MCF 10A (cell line): ENCODE measurements at regions of chr3 and their contacts with region 1.

Region 1: DNA sequence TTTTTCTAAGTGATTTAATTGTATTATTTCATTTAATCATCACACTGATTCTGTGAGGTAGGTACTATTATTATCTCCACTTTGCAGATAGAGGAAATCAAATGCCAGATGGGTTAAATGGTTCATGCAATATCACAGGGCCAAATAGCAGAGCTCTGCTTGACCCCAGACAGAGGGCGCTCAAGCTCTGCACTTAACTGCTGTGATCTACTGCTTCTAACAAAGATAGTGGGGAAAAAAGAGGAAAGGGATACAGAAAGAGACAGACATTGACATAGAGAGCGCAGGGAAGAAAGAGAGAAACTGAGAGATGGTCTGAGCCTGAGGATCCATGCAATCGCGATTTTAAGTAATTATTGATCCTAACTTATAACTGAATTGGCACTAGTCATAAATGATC is 279.1 kb upstream of the THRB start:
- DNase-seq: peak; percentile 72
- H3K4me3 Mint-ChIP-seq: no peak overlapping the region
- H3K27ac Mint-ChIP-seq: no peak overlapping the region
- H3K4me1 Mint-ChIP-seq: peaks cover 6% of the 10 kb centered on the region
- H3K27me3 Mint-ChIP-seq: peaks cover 17% of the 10 kb centered on the region
- CTCF ChIP-seq: peak; percentile 77

Region 2: DNA sequence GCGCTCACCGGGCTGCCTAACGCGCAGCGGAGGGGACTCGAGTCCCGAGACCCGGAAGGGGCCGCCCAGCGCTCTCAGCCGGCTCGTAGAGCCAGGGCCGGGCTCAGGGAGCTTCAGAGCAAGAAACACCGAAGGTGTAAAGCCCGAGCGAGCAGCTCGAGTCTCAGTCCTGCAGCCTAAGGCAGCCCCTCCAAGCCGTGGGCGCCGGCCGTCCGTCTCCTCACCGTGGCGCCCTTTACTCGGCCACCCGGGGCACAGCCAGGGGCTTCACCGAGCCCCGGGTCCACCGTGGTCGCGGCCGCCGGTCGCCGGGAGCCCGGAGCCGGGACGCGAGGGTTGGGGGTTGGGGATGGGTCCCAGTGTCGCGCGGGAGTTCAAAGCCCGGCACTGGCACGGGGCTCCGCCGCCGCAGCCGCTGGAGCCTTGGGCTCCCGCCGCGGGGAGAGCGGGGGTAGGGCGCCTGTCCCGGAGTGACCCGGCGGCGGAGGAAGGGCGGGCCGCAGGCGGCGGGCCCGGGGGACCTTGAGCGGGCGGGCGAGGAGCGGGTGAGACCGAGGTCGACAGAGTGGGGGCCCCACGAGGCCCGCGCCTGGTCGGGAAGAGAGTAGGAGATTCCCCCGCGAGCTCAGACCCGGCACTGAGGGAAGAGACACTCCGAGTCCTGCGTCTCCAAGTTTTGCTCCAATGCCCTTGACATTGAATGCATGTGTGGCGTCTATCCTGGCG is 252.2 kb before region 1 on chr3:
- CTCF ChIA-PET with region 1: no interaction called
- POLR2A ChIA-PET with region 1: no interaction called
- intact Hi-C with region 1: no loop called
- DNase-seq: peak; percentile 52
- H3K4me3 Mint-ChIP-seq: peak overlapping the region; percentile 61
- H3K27ac Mint-ChIP-seq: peak overlapping the region; percentile 7
- H3K4me1 Mint-ChIP-seq: peaks cover 5% of the 10 kb centered on the region
- H3K27me3 Mint-ChIP-seq: no peaks in the 10 kb centered on the region
- CTCF ChIP-seq: no peak

Region 3: DNA sequence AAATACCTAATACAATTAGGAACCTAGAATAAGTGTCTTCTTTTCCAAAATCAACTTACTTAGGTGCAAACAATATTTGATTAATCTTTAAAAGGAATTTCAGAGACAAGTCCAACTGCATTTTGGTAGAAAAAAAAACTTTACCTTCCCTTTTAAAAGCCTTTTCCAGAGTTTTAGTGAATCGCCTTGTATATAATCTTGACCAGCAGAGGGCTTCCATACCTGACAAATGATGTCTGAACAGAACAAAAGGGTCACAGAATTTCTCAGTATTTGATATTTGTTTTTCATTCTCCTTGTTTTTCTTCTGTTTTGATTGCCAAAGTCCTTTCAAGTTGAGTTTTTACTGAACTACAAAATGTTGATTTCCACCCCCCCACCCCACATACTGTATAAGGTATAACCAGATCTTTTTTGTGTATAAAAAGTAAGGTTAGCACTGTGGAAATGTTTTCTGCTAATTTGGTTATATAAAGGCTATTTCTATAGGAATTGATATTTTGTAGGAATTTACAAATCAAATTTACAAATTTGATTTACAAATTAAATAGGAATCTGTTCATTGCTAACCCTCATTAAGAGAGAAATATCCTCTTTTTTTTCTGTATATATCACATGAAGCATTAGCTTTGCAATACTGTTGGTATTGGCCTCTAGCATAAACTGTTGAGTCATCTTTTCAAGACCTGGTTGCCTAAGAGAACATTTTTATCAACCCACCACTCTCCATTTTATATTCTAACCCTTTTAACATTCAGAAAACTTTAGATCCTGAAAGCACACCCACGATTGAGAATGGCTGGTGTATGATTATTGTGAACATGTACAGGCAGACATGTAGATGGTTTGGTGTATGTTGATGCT is 190.2 kb after region 1 on chr3:
- CTCF ChIA-PET with region 1: interaction called, 4 read pairs
- POLR2A ChIA-PET with region 1: no interaction called
- intact Hi-C with region 1: loop called (anchors 5 kb)
- DNase-seq: peak; percentile 47
- H3K4me3 Mint-ChIP-seq: no peak overlapping the region
- H3K27ac Mint-ChIP-seq: no peak overlapping the region
- H3K4me1 Mint-ChIP-seq: peaks cover 8% of the 10 kb centered on the region
- H3K27me3 Mint-ChIP-seq: no peaks in the 10 kb centered on the region
- CTCF ChIP-seq: peak; percentile 36

Region 4: GRCh38 chr3:25033407-25034029 is 259.7 kb after region 1 on chr3:
- CTCF ChIA-PET with region 1: interaction called, 8 read pairs
- POLR2A ChIA-PET with region 1: no interaction called
- intact Hi-C with region 1: loop called (anchors 2 kb)
- DNase-seq: peak; percentile 66
- H3K4me3 Mint-ChIP-seq: no peak overlapping the region
- H3K27ac Mint-ChIP-seq: no peak overlapping the region
- H3K4me1 Mint-ChIP-seq: no peaks in the 10 kb centered on the region
- H3K27me3 Mint-ChIP-seq: no peaks in the 10 kb centered on the region
- CTCF ChIP-seq: peak; percentile 45